ENCODE measurements at regions of chr2 and their contacts with region 1.

Region 1: GRCh38 chr2:178718988-178719387 is 88.2 kb downstream of the TTN start:
- DNase-seq: no peak
- ATAC-seq: no peak
- H3K4me3 ChIP-seq: no peak overlapping the region
- H3K27ac ChIP-seq: no peak overlapping the region
- H3K4me1 ChIP-seq: no peaks in the 10 kb centered on the region
- H3K27me3 ChIP-seq: no peaks in the 10 kb centered on the region; the same call in 1 of the 2 replicates
- CTCF ChIP-seq: no peak
- POLR2A ChIP-seq: no peak
- RAD21 ChIP-seq: no peak

Region 2: DNA sequence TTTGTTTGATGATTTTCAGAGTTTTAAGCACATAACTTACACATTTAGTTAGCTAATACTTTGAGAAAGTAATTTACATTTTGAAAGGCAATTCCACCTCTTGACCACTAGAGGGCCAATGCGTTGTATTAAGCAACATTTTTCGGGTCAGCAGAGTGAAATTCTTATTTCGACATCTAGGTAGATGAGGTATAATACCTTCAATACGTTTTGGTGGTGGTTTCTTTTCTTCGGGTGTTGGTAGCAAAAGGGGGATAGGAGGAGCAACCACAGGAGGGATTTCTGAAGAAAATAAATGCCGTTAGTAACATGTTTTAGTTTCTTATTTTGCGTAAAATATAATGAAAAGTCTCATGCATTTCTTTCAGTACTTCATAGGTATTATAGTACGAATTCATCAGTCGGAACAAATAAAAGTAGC is 18.1 kb before region 1 on chr2:
- CTCF ChIA-PET with region 1: interaction called, 10 read pairs
- POLR2A ChIA-PET with region 1: no interaction called
- dilution Hi-C with region 1: no loop called
- in situ Hi-C with region 1: no loop called
- intact Hi-C with region 1: no loop called
- DNase-seq: peak; percentile 35
- ATAC-seq: peak; percentile 42; the same call in 1 of the 2 replicates
- H3K4me3 ChIP-seq: no peak overlapping the region
- H3K27ac ChIP-seq: no peak overlapping the region
- H3K4me1 ChIP-seq: no peaks in the 10 kb centered on the region
- H3K27me3 ChIP-seq: no peaks in the 10 kb centered on the region; the same call in 1 of the 2 replicates
- CTCF ChIP-seq: peak; percentile 75
- POLR2A ChIP-seq: no peak
- RAD21 ChIP-seq: peak; percentile 31; the same call in 1 of the 2 replicates

Measured in IMR-90 (cell line).